Spleen (tissue), 13 donors: ENCODE measurements at regions of chr16 and their contacts with region 1.

Region 1: GRCh38 chr16:30354423-30355143 is 525 bp downstream of the CD2BP2 start:
- DNase-seq: peak; percentile 78
- H3K4me3 ChIP-seq: peak overlapping the region; percentile 75 to 98 (median 86)
- H3K27ac ChIP-seq: peak overlapping the region; percentile 85 to 98 (median 94)
- H3K4me1 ChIP-seq: peaks cover 19 to 81% (median 60%) of the 10 kb centered on the region in 6 donors
- H3K27me3 ChIP-seq: no peaks in the 10 kb centered on the region
- CTCF ChIP-seq: no peak
- POLR2A ChIP-seq: no peak

Region 2: DNA sequence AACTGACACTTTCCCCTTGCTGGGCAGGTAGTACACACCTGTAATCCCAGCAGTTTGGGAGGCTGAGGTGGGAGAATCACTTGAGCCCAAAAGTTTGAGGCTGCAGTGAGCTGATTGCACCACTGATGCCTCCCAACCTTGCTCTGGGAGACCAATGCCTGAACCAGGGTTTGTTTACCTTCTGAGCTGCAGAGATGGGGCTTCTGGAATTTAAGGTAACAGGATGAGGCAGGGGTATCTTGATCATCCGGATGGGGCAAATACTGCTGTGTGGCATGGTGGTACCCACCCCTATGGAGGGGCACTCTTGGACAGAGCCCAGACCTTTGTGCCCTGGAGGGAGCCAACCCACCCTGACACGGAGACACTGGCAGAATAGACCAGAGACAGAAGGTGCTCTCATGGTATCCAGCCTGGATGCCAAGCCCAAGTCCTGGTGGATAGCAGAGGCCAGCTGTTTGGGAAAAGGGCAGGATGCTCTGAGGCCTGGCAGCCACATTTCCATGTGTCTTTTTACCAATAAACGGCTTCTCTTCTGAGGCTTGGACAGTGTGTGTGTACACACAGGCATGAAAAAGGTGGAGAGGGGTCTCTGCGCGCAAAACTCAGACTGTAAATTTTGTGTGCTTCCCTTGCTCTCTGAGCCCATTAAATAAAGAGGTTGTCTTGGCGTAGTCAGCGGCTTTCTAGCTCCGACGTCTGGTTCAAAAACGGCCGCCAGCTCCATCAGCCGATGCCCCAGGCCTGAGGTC is 45.0 kb after region 1 on chr16:
- intact Hi-C with region 1: loop called (anchors 5 kb)
- DNase-seq: no peak
- H3K4me3 ChIP-seq: peak overlapping the region; percentile 54 to 73 (median 60)
- H3K27ac ChIP-seq: peak overlapping the region; percentile 48 to 85 (median 81)
- H3K4me1 ChIP-seq: peaks cover 10 to 77% (median 50%) of the 10 kb centered on the region in 6 donors
- H3K27me3 ChIP-seq: no peaks in the 10 kb centered on the region
- CTCF ChIP-seq: no peak
- POLR2A ChIP-seq: no peak

Region 3: GRCh38 chr16:30523768-30524574 is 169.4 kb after region 1 on chr16:
- intact Hi-C with region 1: no loop called
- DNase-seq: no peak
- H3K4me3 ChIP-seq: no peak overlapping the region
- H3K27ac ChIP-seq: peak overlapping the region in 3 of 8 donors; percentile 13 to 33 (median 30)
- H3K4me1 ChIP-seq: peaks cover 6 to 43% (median 31%) of the 10 kb centered on the region in 6 donors
- H3K27me3 ChIP-seq: no peaks in the 10 kb centered on the region
- CTCF ChIP-seq: no peak
- POLR2A ChIP-seq: no peak